ENCODE measurements at regions of chr2 and their contacts with region 1.

Region 1: GRCh38 chr2:48433682-48434081 is 96.3 kb upstream of the STON1 start:
- DNase-seq: no peak
- H3K4me3 ChIP-seq: no peak overlapping the region
- H3K27ac ChIP-seq: no peak overlapping the region
- H3K4me1 ChIP-seq: no peaks in the 10 kb centered on the region
- H3K27me3 ChIP-seq: peaks cover 5 to 6% of the 10 kb centered on the region in 2 experiments
- CTCF ChIP-seq: no peak
- POLR2A ChIP-seq: no peak

Region 2: GRCh38 chr2:48406116-48406515 is 27.6 kb before region 1 on chr2:
- CTCF ChIA-PET with region 1: no interaction called
- POLR2A ChIA-PET with region 1: no interaction called
- dilution Hi-C with region 1: no loop called
- intact Hi-C with region 1: loop called (anchors 1 kb)
- DNase-seq: no peak
- H3K4me3 ChIP-seq: no peak overlapping the region
- H3K27ac ChIP-seq: no peak overlapping the region
- H3K4me1 ChIP-seq: no peaks in the 10 kb centered on the region
- H3K27me3 ChIP-seq: no peaks in the 10 kb centered on the region
- CTCF ChIP-seq: no peak
- POLR2A ChIP-seq: no peak